PC-3 (cell line): ENCODE measurements at regions of chr1 and their contacts with region 1.

Region 1: GRCh38 chr1:154133256-154133655 is 21.6 kb downstream of the NUP210L start:
- DNase-seq: no peak
- ATAC-seq: no peak
- H3K4me3 ChIP-seq: no peak overlapping the region
- H3K27ac ChIP-seq: no peak overlapping the region
- H3K4me1 ChIP-seq: peaks cover 10% of the 10 kb centered on the region
- H3K27me3 ChIP-seq: no peaks in the 10 kb centered on the region
- CTCF ChIP-seq: no peak

Region 2: DNA sequence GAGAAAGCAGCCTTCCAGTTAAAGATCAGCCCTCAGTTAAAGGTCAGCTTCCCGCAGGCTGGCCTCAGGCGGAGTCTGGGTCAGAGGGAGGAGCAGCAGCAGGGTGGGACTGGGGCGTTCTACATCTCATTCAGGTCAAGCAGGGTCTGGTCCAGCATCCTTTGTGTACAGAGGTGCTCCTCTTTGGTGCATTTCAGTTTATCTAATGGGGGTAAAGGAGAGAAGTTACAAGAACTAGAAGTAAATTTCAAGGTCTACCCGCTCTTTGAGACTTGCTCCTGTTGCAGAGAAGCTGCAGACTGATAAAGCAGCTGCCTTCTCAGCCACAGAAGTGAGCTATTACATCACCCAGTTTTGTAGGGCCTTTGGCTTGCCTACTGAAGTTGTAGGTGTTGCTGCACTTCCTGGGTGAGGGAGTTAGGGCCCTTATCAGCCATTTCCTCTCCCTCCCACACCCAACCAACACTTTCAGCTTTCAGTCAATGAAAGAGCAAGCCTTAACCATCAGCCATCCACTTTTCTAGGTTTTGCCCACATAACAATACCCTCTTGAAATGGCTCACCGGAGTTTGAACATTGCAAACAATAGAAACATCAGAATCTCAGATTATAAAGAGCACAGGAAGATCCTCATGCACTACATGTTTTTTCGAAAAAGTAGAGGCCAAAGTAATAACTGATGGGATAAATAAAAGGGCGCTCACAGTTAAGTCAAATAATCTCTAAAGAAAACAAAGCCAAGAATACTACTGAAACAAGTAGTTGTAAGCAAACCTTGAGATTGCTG is 24.5 kb after region 1 on chr1:
- CTCF ChIA-PET with region 1: no interaction called
- POLR2A ChIA-PET with region 1: interaction called, 12 read pairs
- intact Hi-C with region 1: no loop called
- DNase-seq: no peak
- ATAC-seq: no peak
- H3K4me3 ChIP-seq: no peak overlapping the region
- H3K27ac ChIP-seq: no peak overlapping the region
- H3K4me1 ChIP-seq: no peaks in the 10 kb centered on the region
- H3K27me3 ChIP-seq: no peaks in the 10 kb centered on the region
- CTCF ChIP-seq: no peak